Posterior vena cava (tissue), 2 donors: ENCODE measurements at regions of chr3 and their contacts with region 1.

Region 1: DNA sequence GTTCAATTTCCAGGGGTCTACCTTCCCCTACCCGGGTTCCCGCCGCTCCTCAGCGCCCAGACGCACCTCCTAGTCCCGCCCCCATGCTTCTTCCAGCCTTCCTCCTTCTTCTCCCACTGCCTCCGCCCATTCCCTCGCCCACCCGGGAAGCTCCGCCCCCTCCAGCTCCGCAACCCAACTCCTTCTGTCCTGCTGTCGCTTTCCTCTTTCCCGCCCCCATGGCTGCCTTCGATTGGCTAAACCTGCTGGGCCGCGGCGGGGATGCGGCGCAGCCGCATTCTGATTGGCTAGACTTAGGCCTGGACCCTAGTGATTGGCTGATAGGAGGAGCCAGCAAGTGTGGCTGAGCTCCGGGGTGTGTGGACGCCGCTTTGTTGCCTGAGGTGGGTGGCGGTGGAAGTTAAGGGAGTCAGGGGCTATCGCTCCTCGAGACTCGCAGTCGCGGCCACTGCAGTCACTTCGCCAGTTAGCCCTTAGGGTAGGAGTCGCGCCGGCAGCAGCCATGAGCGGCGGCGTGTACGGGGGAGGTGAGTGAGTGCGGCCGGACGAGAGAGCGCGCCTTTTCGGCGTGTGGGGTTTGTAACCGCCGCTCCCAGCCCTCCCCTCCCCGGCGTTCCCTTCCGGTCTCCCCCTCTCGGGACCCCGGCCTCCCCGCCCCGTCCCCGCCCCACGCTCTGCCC is at the start of gene ACTL6A:
- DNase-seq: peak; percentile 100
- total RNA-seq, gene ACTL6A: 27.0 to 28.9 TPM

Region 2: GRCh38 chr3:179421500-179421899 is 141.2 kb before region 1 on chr3:
- intact Hi-C with region 1: loop called (anchors 10 kb)
- DNase-seq: no peak

Region 3: GRCh38 chr3:179451265-179452175 is 111.2 kb before region 1 on chr3 and contains the start of gene GNB4:
- intact Hi-C with region 1: loop called in 1 of 2 experiments (anchors 10 kb)
- DNase-seq: peak; percentile 95
- total RNA-seq, gene GNB4: 59.0 to 66.6 TPM

Region 4: DNA sequence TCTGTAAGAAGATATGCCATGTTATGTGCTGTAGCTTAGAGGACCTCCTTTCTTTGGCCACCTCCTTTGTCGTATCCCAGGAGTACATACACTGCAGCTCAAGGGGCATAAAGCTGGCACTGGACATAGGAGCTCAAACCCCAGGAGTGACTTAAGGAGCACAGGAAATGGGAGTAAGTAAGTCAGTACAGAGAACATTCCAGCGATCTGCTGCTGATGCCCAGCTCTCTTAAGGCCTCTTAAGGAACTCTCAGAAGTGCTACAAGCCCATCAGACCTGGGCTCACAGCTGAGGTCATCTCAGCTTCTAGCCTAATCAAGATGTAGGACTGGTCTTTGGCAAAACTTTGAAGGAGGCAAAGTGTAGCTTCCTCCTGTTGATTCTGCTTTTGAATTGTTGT is 21.6 kb before region 1 on chr3:
- intact Hi-C with region 1: no loop called
- DNase-seq: no peak